BJ (cell line): ENCODE measurements at regions of chr17 and their contacts with region 1.

Region 1: GRCh38 chr17:27332485-27333409 is 38.8 kb downstream of the WSB1 start:
- DNase-seq: peak; percentile 86
- H3K4me3 ChIP-seq: peak overlapping the region; percentile 47
- H3K27me3 ChIP-seq: no peaks in the 10 kb centered on the region
- CTCF ChIP-seq: peak; percentile 88

Region 2: GRCh38 chr17:27245230-27245696 is 87.5 kb before region 1 on chr17:
- CTCF ChIA-PET with region 1: interaction called, 162 read pairs
- POLR2A ChIA-PET with region 1: no interaction called
- DNase-seq: no peak
- H3K4me3 ChIP-seq: peak overlapping the region; percentile 5; the same call in 1 of the 2 replicates
- H3K27me3 ChIP-seq: 0 out of 2 replicates have a peak, but pooled peaks cover 1% of the 10 kb centered on the region
- CTCF ChIP-seq: peak; percentile 69

Region 3: DNA sequence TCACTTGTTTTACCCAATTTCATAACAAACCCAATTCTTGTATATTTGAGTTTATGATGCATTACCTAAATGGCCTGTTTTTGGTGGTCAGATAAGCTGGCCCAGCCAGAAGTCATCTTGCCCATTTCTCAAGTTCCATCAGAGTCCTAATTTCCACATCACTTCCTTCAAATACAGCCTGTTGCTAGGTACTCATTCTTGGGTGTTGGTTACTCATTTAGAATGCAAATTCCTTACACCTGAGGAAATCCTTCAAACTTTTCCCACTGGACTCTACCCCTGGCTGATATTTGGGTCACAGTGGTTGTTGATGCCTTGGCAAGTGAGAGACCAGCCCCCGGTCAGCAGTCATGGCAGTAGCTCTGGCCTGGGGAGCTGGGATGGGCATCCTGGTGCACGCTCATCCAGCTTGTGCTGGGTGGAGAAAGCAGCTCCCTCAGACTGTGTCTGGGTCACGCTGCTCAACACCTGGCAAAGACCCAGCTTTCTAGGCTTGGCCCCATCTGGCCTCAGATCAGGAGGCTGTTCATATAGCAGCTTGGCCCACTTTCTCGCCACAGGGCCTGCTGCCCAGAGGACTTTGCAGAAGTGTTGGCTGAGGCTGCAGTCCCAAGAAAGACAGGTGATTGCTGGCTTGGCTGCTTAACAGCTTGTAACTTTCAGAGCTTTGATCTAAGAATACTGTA is 13.1 kb before region 1 on chr17:
- CTCF ChIA-PET with region 1: interaction called, 12 read pairs
- POLR2A ChIA-PET with region 1: interaction called, 3 read pairs
- DNase-seq: no peak
- H3K4me3 ChIP-seq: no peak overlapping the region
- H3K27me3 ChIP-seq: no peaks in the 10 kb centered on the region
- CTCF ChIP-seq: no peak

Region 4: DNA sequence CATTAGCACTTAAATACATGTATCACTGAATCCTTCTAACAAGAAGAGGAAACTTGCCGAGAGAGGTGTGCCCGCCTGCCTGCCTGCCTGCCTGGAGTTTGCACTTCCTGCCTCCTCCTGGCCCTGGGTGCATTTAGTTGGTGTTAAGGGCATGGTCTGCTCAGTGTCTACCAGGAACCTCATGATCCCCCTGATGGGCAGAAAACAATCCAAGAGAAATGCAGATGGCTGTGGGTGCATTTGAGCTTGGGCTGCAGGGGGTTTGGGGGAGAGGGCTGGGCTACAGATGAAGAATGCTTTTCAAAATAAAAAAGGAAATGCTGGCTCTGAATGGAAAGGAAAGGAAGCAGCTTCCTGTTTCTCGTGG is 133.6 kb after region 1 on chr17:
- CTCF ChIA-PET with region 1: no interaction called
- POLR2A ChIA-PET with region 1: no interaction called
- DNase-seq: no peak
- H3K4me3 ChIP-seq: no peak overlapping the region
- H3K27me3 ChIP-seq: no peaks in the 10 kb centered on the region
- CTCF ChIP-seq: no peak